ENCODE measurements at regions of chr1 and their contacts with region 1.

Region 1: DNA sequence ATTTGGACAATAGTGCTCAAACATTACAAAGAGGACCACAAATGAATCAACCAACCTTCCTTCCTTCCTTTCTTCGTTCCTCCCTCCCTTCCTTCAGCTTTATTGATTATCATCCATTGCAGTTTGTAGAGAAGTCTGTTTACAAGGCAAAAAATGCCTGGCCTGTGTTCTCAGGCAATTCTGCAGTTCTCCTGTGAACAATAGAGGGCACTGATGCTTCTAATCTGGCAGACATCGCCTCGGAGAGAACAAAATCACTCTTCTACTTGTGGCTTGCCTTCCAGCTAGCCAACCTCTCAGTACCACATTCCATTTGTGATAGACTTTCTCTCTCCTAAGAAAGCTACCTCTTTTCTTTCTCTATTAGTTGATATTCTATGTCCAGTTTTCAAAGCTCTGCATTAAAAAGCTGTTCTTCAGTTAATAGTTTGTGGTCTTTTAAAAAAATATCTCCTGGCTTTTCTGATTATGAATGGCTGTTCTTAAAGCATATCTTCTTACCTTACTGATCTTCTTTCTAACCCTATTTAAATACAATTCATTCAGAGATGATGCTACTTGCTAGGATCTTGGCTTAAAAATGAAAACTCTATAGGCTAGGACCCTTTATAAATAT is 26.9 kb upstream of the ESRRG start:
- DNase-seq: peak; percentile 33
- H3K4me3 ChIP-seq: no peak overlapping the region; a peak in 1 of 4 replicates
- H3K27ac ChIP-seq: no peak overlapping the region
- H3K4me1 ChIP-seq: no peaks in the 10 kb centered on the region; a peak in 1 of 4 replicates
- H3K27me3 ChIP-seq: no peaks in the 10 kb centered on the region
- CTCF ChIP-seq: peak; percentile 74
- EP300 ChIP-seq: no peak
- RAD21 ChIP-seq: peak; percentile 96

Region 2: GRCh38 chr1:216731562-216731961 is 18.6 kb before region 1 on chr1:
- CTCF ChIA-PET with region 1: interaction called, 13 read pairs
- POLR2A ChIA-PET with region 1: no interaction called
- DNase-seq: no peak
- H3K4me3 ChIP-seq: no peak overlapping the region
- H3K27ac ChIP-seq: no peak overlapping the region
- H3K4me1 ChIP-seq: no peaks in the 10 kb centered on the region; a peak in 1 of 4 replicates
- H3K27me3 ChIP-seq: no peaks in the 10 kb centered on the region
- CTCF ChIP-seq: no peak
- EP300 ChIP-seq: no peak
- RAD21 ChIP-seq: no peak

Region 3: GRCh38 chr1:216766633-216767325 is 16.7 kb after region 1 on chr1:
- CTCF ChIA-PET with region 1: interaction called, 13 read pairs
- POLR2A ChIA-PET with region 1: interaction called, 3 read pairs
- DNase-seq: peak; percentile 6
- H3K4me3 ChIP-seq: no peak overlapping the region
- H3K27ac ChIP-seq: peak overlapping the region in 1 of 2 experiments; percentile 6; a peak in 1 of 4 replicates
- H3K4me1 ChIP-seq: peaks cover 0 to 7% of the 10 kb centered on the region in 2 experiments; a peak in 1 of 4 replicates
- H3K27me3 ChIP-seq: no peaks in the 10 kb centered on the region
- CTCF ChIP-seq: no peak
- EP300 ChIP-seq: peak in 1 of 2 experiments; percentile 37; a peak in 1 of 4 replicates
- RAD21 ChIP-seq: no peak

Region 4: GRCh38 chr1:216884614-216885229 is 134.6 kb after region 1 on chr1:
- CTCF ChIA-PET with region 1: no interaction called
- POLR2A ChIA-PET with region 1: no interaction called
- DNase-seq: no peak
- H3K4me3 ChIP-seq: no peak overlapping the region
- H3K27ac ChIP-seq: peak overlapping the region in 1 of 2 experiments; percentile 36; a peak in 1 of 4 replicates
- H3K4me1 ChIP-seq: no peaks in the 10 kb centered on the region; a peak in 1 of 4 replicates
- H3K27me3 ChIP-seq: no peaks in the 10 kb centered on the region
- CTCF ChIP-seq: no peak
- EP300 ChIP-seq: no peak
- RAD21 ChIP-seq: no peak

Region 5: GRCh38 chr1:217333939-217334338 is 583.8 kb after region 1 on chr1:
- CTCF ChIA-PET with region 1: interaction called, 24 read pairs
- POLR2A ChIA-PET with region 1: no interaction called
- DNase-seq: peak; percentile 58
- H3K4me3 ChIP-seq: no peak overlapping the region
- H3K27ac ChIP-seq: no peak overlapping the region
- H3K4me1 ChIP-seq: no peaks in the 10 kb centered on the region; a peak in 1 of 4 replicates
- H3K27me3 ChIP-seq: no peaks in the 10 kb centered on the region
- CTCF ChIP-seq: peak; percentile 74
- EP300 ChIP-seq: no peak
- RAD21 ChIP-seq: peak; percentile 89